Activated T-helper 2 cell treated with anti-CD3 and anti-CD28 coated beads, Interferon-gamma antibody, Interleukin-2, Interleukin-4, amounts not matched to agents 10 μg/mL and 5 μg/mL and 100 μg/mL, durations not matched to agents 14 hours and 24 hours and 36 hours (primary cell): ENCODE measurements at regions of chr1 and their contacts with region 1.

Region 1: GRCh38 chr1:31762726-31763670 is 1.1 kb downstream of the ADGRB2 start:
- DNase-seq: peak; percentile 54
- H3K4me3 Mint-ChIP-seq: peak overlapping the region; percentile 81
- H3K27ac Mint-ChIP-seq: peak overlapping the region; percentile 8
- H3K4me1 Mint-ChIP-seq: peaks cover 13% of the 10 kb centered on the region
- H3K27me3 Mint-ChIP-seq: peaks cover 55% of the 10 kb centered on the region

Region 2: GRCh38 chr1:31487143-31487542 is 275.9 kb before region 1 on chr1:
- intact Hi-C with region 1: no loop called
- DNase-seq: no peak
- H3K4me3 Mint-ChIP-seq: no peak overlapping the region
- H3K27ac Mint-ChIP-seq: no peak overlapping the region
- H3K4me1 Mint-ChIP-seq: peaks cover 12% of the 10 kb centered on the region
- H3K27me3 Mint-ChIP-seq: peaks cover 10% of the 10 kb centered on the region

Region 3: DNA sequence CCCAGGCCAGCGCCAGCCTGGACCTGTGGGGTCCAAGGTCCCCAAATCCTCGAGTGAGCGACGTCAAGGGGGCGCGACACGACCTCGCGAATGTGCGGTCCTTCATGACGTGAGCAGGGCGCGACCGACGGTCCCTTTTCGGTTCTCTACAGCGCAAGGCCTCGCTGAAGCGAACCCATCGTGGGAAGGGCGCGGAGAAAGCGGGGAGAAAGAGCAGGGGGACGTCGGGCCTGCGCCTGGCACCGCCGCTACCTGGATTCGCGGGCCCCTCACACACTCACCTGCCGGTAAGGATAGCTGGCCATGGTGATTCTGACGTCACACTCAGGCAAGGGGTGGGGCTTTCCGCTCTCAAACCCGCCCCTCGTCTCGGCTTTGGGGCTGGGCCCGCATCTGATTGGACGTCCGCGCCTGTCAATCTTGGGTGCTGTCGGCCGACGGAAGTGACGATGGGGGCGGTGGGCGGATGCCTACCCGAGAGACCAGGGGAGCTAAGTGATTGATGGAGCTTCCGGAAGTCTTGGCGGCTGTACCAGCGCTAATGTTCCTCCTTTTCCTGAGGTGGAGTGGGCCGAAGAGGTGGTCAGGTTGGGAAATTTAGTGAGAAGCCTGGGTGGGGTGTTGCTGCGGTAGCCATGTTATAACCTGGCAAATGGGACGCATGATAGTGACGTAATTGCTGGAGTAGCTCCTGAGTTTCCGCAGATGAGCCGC is 118.3 kb before region 1 on chr1 and contains the start of gene PEF1:
- intact Hi-C with region 1: loop called (anchors 10 kb)
- DNase-seq: peak; percentile 98
- H3K4me3 Mint-ChIP-seq: peak within 1 kb of the TSS; percentile 96
- H3K27ac Mint-ChIP-seq: peak within 1 kb of the TSS; percentile 100
- H3K4me1 Mint-ChIP-seq: peaks cover 15% of the 10 kb centered on the region
- H3K27me3 Mint-ChIP-seq: no peaks in the 10 kb centered on the region
- total RNA-seq, gene PEF1: 56.5 and 61.5 TPM in 2 replicates

Region 4: DNA sequence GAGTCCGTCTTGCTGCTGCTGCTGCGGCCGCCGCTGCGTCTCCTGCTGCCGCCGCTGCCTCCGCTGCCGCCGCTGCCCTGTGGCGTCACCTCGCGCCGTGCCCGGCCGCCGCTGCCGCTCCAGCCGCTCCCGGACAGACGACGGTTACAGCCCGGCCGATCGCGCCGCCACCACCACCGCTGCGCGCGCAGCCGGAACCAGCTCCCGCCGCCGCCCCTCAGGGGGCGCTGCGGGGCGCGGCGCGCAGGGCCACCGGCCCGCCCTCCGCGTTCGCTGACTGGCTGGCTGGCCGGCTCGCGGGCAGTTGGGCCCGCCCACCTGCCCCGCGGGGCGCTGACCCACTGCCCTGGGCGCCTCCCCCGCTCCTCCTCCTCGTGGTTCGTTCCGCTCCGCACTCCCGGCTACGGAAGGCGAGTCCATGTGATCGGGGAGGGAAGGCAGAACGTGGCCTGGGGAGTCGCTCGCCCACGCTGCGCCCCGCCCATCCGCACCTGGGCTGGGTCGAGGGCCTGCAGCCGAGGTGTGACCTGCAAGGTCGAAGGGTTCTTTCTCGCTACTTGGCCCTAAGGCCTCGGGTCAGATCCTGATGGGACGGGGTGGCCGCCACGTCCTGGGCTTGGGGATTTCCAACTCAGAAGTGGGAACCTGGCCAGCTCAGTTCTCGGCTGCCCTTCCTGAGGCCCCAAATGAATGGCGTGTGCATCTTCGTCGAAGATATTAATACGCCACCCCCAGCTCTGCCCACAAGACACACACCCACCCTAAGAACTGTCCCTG is 175.4 kb after region 1 on chr1 and contains the start of gene PTP4A2:
- intact Hi-C with region 1: loop called (anchors 5 kb)
- DNase-seq: peak; percentile 85
- H3K4me3 Mint-ChIP-seq: peak within 1 kb of the TSS; percentile 95
- H3K27ac Mint-ChIP-seq: peak within 1 kb of the TSS; percentile 92
- H3K4me1 Mint-ChIP-seq: peaks cover 53% of the 10 kb centered on the region
- H3K27me3 Mint-ChIP-seq: no peaks in the 10 kb centered on the region
- total RNA-seq, gene PTP4A2: 313 and 334 TPM in 2 replicates

Region 5: GRCh38 chr1:32107742-32108661 is 345.0 kb after region 1 on chr1 and contains the start of gene KPNA6:
- intact Hi-C with region 1: no loop called
- DNase-seq: peak; percentile 90
- H3K4me3 Mint-ChIP-seq: peak within 1 kb of the TSS; percentile 98
- H3K27ac Mint-ChIP-seq: peak within 1 kb of the TSS; percentile 97
- H3K4me1 Mint-ChIP-seq: peaks cover 32% of the 10 kb centered on the region
- H3K27me3 Mint-ChIP-seq: no peaks in the 10 kb centered on the region
- total RNA-seq, gene KPNA6: 81.2 and 84.0 TPM in 2 replicates